Right ventricle myocardium superior (tissue), 1 donor: ENCODE measurements at regions of chr6 and their contacts with region 1.

Region 1: DNA sequence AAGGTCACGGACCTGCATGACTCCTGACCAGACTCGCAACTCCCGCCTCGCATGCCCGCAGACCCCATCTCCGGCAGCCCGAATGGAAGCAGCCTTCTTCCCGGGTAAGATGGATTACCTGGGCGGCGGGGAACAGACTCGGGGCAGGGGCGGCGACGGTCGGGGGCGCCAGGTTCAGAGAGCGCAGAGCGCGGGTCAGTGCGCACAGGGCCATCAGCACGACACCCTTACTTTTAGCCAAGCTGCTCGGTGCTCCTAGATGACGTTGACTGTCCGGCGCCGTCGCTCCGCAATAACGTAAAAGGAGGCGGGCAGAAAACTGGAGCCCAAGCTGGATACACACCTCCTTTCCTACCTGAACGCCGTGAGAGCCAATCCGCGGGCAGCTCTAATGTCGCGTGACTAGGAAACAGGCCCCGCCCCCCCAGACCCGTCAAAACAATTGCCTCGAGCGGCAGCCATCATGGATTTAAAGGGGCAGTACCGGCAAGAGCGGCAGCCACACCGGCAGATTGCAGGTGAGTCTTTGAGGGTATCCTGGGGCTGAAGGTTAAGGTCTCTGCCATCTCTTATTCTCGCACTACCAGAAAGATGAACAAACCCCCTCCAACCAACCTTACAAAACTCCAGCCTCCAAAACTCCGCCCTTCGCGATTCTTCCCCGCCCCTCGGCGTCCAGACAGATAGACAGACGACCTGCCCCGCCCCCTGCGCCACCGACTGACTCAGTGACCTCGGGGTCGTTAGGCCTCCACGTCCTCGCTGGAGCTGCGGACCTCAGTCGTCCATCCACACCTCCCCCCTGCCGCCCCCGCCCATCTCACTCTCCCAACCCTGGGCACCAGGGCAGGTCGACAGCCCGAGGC is at the starts of genes KLC4 and MRPL2:
- DNase-seq: peak; percentile 98
- ATAC-seq: peak; percentile 98
- total RNA-seq, gene KLC4: 30.6 TPM
- total RNA-seq, gene MRPL2: 107 TPM

Region 2: DNA sequence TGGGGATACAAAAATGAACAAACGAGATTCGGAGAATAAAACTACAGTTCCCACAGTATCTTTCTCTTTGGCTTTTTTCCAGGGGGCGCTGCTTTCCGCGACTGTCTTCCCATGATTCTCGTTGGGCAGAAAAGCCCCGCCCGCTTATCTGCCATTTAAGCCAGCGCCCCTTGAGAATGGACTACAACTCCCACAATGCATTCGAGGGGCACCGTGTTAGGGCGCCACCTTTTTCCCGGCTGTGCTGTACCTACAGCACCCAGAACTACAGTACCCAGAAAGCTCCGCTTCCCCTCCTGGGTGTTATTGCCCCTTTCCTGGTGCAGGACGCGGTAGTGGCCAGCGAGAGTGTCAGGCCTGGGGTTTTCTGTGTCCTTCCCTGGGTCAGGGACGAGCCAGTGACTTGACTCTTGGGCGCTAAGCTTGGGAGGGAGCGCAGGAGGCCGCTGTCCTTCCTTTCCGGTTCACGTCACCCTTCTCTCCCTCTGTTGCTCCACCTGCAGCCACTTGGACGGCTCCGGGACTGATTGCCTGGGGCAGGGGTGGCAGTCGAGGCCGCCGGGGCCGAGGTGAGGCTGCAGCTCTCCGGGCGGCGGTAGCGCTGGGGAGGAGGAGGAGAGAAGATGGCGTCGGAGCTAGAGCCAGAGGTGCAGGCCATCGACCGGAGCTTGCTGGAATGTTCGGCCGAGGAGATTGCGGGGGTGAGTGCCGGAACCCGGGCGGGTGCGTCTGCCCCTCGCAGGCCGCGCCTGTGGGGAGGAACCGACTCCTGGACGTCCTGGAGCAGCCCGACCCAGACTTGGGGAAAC is 495.5 kb before region 1 on chr6 and contains the start of gene UBR2:
- intact Hi-C with region 1: no loop called
- DNase-seq: peak; percentile 97
- ATAC-seq: peak; percentile 97
- total RNA-seq, gene UBR2: 32.0 TPM

Region 3: DNA sequence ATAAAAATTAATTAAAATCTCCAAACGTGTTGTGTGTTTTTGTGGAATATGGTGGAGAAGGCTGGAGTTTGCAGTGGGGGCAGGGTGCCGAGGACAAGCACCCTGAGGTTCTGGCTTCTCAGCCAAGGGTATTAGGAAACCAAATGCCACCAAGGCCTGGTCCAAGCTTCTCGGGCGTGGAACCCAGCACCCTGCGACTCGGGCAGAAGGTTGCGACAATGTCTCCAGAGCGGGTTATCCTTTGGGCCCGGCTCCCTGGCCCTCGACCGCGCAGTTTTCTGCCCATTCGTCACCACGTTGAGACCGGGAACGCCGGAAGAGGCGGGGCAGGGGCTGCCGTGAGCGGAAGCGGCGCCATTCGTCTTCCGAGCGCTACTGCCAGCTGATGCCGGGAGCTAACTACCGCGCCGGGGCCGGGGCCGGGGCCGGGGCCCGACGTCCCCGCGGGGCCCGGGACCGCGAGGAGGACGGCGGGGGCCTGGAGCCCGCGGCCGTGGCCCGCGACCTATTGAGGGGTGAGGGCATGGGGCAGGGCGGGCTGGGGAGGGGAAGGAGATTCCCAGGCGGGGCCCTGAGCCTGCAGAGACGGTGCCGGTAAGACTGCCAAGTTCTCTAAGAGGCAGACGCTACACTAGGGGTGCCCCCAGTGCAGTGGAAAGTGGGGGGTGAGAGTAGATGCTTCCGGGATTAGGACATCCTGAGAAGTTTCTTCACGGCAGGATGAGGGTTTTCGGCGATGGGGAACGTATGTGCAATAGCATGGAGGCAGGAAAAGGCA is 37.9 kb before region 1 on chr6 and contains the start of gene RRP36:
- intact Hi-C with region 1: loop called (anchors 5 kb)
- DNase-seq: peak; percentile 92
- ATAC-seq: peak; percentile 84
- total RNA-seq, gene RRP36: 22.9 TPM